ENCODE measurements at regions of chr14 and their contacts with region 1.

Region 1: GRCh38 chr14:22276913-22277816 is 311.9 kb downstream of the DAD1 start:
- H3K4me3 ChIP-seq: no peak overlapping the region
- H3K27ac ChIP-seq: no peak overlapping the region
- H3K4me1 ChIP-seq: no peaks in the 10 kb centered on the region
- CTCF ChIP-seq: no peak

Region 2: GRCh38 chr14:22265319-22266137 is 11.6 kb before region 1 on chr14:
- CTCF ChIA-PET with region 1: interaction called, 19 read pairs
- POLR2A ChIA-PET with region 1: no interaction called
- H3K4me3 ChIP-seq: no peak overlapping the region
- H3K27ac ChIP-seq: no peak overlapping the region
- H3K4me1 ChIP-seq: peaks cover 11% of the 10 kb centered on the region
- CTCF ChIP-seq: 0 out of 2 replicates have a peak, but pooled peaks have one; percentile 18

Measured in HEK293 (cell line).